Ascending aorta (tissue), 2 donors: ENCODE measurements at regions of chr9 and their contacts with region 1.

Region 1: GRCh38 chr9:128455849-128456612 is at the start of gene ODF2:
- DNase-seq: peak; percentile 87 to 98
- H3K4me3 ChIP-seq: peak within 1 kb of the TSS; percentile 71 to 90
- H3K27ac ChIP-seq: peak within 1 kb of the TSS; percentile 87 to 89
- H3K4me1 ChIP-seq: peaks cover 0 to 8% of the 10 kb centered on the region in 2 donors
- H3K27me3 ChIP-seq: no peaks in the 10 kb centered on the region
- CTCF ChIP-seq: no peak
- total RNA-seq, gene ODF2: 26.9 TPM

Region 2: GRCh38 chr9:128275996-128276573 is 179.9 kb before region 1 on chr9 and contains the starts of genes GOLGA2 and SWI5:
- intact Hi-C with region 1: loop called (anchors 5 kb)
- DNase-seq: peak; percentile 95 to 100
- H3K4me3 ChIP-seq: peak within 1 kb of the TSS; percentile 78 to 91
- H3K27ac ChIP-seq: peak within 1 kb of the TSS; percentile 86 to 87
- H3K4me1 ChIP-seq: peaks cover 6 to 20% of the 10 kb centered on the region in 2 donors
- H3K27me3 ChIP-seq: no peaks in the 10 kb centered on the region
- CTCF ChIP-seq: no peak
- total RNA-seq, gene GOLGA2: 74.9 TPM
- total RNA-seq, gene SWI5: 1.8 TPM

Region 3: DNA sequence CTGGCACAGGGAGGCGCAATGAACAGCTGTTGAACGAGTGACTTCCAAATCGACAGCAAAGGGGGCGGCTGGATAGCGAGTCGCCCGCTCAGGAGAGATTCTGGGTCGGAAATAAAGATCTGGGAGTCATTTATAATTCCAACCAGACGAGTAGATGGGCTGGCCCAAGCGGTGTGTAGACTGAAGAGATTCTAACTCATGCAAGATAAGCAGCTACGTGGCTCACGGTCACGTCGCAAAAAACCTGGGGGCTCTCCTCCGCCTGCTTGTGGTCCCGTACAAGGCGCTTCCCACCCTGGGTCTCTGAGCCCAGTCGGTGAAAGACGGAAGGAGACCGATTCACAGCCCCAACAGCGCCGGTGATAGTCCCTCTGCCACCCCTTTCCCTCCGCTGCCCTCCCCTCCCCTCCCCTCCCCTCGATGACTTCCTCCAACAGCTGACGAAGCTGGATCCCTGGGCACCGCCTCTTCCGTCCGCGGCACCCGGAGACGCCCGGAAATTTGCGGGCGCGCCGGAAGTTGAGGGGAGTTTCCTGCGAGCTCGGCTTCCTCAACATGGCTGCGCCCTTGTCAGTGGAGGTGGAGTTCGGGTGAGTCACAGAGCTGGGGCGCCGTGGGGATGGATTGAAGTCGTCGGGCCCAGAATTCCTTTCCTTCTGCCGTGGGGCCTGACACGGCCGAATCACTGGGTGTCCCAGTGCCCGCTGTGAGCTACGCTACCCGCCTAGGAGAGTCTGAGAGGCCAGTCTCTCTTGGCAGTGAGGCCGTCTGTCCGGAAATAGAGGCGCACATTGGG is 85.0 kb before region 1 on chr9 and contains the start of gene URM1:
- intact Hi-C with region 1: loop called (anchors 1 kb)
- DNase-seq: peak; percentile 80 to 98
- H3K4me3 ChIP-seq: peak within 1 kb of the TSS; percentile 66 to 80
- H3K27ac ChIP-seq: peak within 1 kb of the TSS; percentile 84 to 87
- H3K4me1 ChIP-seq: peaks cover 0 to 8% of the 10 kb centered on the region in 2 donors
- H3K27me3 ChIP-seq: no peaks in the 10 kb centered on the region
- CTCF ChIP-seq: no peak
- total RNA-seq, gene URM1: 37.5 TPM

Region 4: GRCh38 chr9:128438343-128439109 is 17.5 kb before region 1 on chr9:
- intact Hi-C with region 1: loop called (anchors 1 kb)
- DNase-seq: peak in 1 of 2 donors; percentile 89
- H3K4me3 ChIP-seq: no peak overlapping the region
- H3K27ac ChIP-seq: no peak overlapping the region
- H3K4me1 ChIP-seq: peaks cover 0 to 3% of the 10 kb centered on the region in 2 donors
- H3K27me3 ChIP-seq: no peaks in the 10 kb centered on the region
- CTCF ChIP-seq: peak; percentile 91 to 96 (median 93)

Region 5: GRCh38 chr9:128552153-128552743 is 96.2 kb after region 1 on chr9 and contains the start of gene SPTAN1:
- intact Hi-C with region 1: loop called (anchors 2 kb)
- DNase-seq: peak; percentile 64 to 93
- H3K4me3 ChIP-seq: peak within 1 kb of the TSS; percentile 94 to 96
- H3K27ac ChIP-seq: peak within 1 kb of the TSS; percentile 96 to 98
- H3K4me1 ChIP-seq: peaks cover 5 to 43% of the 10 kb centered on the region in 2 donors
- H3K27me3 ChIP-seq: no peaks in the 10 kb centered on the region
- CTCF ChIP-seq: peak in 2 of 3 experiments; percentile 6 to 7
- total RNA-seq, gene SPTAN1: 687 TPM